SK-N-SH (cell line): ENCODE measurements at regions of chr16 and their contacts with region 1.

Region 1: DNA sequence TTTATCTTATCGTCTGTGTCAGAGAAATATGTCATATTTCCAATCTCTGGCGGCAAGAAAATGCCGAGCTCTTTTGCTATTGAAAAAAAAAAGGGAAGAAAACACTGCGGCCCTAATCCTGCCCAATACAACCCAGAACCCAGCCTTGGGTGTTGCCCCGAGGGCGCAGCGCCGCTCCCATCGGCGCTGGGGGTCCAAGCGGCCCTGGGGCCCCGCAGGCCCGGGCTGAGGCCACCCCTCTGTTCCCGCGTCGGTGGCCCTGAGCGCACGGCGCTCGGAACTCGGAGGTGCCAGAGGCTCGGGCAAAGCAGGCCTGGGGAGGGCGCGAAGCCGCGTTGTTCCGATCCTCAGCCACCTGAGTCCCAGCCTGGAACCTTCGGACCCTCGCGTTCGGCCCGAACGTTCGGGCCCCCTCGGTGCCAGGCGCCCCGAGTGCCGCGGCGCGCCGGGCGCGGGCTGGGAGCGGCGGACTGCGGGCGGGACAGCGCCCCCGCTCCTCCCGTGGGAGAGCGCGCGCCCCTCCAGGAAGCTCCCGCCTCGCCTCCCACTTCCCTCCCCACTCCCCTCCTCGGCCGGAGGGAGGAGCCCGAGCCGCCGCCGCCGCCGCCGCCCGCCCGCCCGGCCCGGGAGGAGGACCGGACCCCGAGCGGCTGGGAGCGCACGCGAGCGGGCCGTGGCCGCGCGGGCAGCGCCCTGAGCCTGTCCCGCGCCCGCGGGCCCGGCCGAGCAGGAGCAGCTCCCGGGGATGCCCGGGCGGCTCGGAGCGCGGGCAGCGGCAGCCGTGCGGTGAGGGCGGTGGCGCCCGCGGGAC is at the start of gene CPNE2:
- DNase-seq: peak; percentile 95
- H3K4me3 ChIP-seq: peak within 1 kb of the TSS; percentile 75 to 81
- H3K27ac ChIP-seq: peak within 1 kb of the TSS; percentile 36 to 51; a peak in 2 of 4 replicates
- H3K4me1 ChIP-seq: peaks cover 12 to 25% of the 10 kb centered on the region in 2 experiments; a peak in 1 of 4 replicates
- H3K27me3 ChIP-seq: no peaks in the 10 kb centered on the region
- CTCF ChIP-seq: no peak; the same call in 1 of the 2 replicates
- EP300 ChIP-seq: no peak
- RAD21 ChIP-seq: no peak
- polyA plus RNA-seq, gene CPNE2: 63.8 and 73.0 TPM in 2 replicates

Region 2: DNA sequence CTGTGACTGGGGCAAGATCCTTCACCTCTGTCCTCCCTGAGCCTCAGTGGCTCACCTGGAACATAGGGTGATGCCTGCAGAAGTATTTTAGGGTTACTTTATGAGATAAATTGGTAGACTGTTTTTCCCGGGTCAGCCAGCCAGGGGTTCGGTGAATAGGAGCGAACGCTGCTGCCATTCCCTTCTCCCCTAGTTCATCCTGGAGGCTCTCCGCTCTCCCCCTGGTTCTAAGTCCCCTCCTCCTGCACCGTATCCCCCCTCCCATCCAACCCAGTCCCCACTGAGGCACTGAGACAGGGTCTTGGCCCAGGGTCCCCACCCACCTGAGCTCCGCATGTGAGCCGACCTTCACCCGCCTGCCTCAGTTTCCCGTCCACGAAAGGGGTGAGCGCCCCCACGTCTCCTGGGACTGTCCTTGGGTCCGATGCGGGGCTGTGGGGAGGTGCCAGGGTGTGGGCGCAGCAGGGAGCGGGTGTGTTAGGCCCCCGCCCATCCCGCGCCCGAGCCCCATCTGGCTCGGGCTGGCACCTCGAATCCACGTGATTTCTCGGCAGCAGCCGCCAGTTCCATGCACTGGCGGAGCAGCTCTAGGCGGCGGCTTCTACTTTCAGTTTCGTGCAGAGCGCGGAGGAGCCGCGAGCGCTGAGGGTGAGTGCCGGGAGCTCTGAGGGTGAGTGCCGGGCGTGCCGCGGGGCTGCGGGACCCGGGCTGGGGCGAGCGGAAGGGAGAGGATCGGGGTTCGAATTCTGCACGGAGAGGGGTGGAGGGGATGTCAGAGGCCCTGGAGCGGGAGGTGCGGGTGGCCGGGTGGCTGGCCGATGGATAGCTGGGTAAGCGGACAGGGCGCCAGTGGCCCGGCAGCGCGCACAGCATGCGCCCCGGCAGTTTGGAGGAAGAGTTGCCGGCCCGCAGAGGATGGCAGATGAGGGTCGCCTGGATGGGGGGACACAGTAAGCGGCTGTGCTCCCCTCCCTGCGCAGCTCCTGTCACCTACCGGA is 102.9 kb before region 1 on chr16 and contains the start of gene NLRC5:
- CTCF ChIA-PET with region 1: no interaction called
- POLR2A ChIA-PET with region 1: no interaction called
- DNase-seq: peak; percentile 91
- H3K4me3 ChIP-seq: peak within 1 kb of the TSS; percentile 64 to 86
- H3K27ac ChIP-seq: peak within 1 kb of the TSS; percentile 39; a peak in 3 of 4 replicates
- H3K4me1 ChIP-seq: peaks cover 12 to 19% of the 10 kb centered on the region in 2 experiments; a peak in 2 of 4 replicates
- H3K27me3 ChIP-seq: no peaks in the 10 kb centered on the region
- CTCF ChIP-seq: no peak
- EP300 ChIP-seq: peak in 1 of 2 experiments; percentile 16; a peak in 1 of 4 replicates
- RAD21 ChIP-seq: peak; percentile 12; the same call in 1 of the 2 replicates
- polyA plus RNA-seq, gene NLRC5: 6.5 and 7.8 TPM in 2 replicates

Region 3: DNA sequence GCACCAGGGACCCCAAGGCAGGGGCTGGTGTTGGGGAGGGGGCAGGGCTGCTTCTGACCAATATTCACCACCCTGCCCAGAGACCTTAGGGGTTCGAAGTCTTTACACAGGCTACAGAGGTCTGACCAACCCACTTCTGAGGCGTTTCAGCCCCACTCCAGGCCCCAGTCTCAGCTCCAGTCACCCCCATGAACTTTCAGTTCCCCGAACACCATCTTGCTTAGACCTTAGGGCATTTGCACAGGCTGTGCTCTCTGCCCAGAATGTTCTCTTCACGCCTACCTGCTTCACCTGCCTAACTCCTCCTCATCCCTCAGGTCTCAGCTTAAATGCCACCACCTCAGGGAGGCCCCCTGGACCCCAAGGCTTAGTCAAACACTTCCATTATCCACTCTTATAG is 25.6 kb before region 1 on chr16:
- CTCF ChIA-PET with region 1: interaction called, 11 read pairs
- POLR2A ChIA-PET with region 1: interaction called, 7 read pairs
- DNase-seq: no peak
- H3K4me3 ChIP-seq: no peak overlapping the region
- H3K27ac ChIP-seq: no peak overlapping the region
- H3K4me1 ChIP-seq: peaks cover 0 to 12% of the 10 kb centered on the region in 2 experiments; a peak in 2 of 4 replicates
- H3K27me3 ChIP-seq: no peaks in the 10 kb centered on the region
- CTCF ChIP-seq: no peak
- EP300 ChIP-seq: no peak
- RAD21 ChIP-seq: no peak

Region 4: GRCh38 chr16:57077714-57078113 is 14.5 kb before region 1 on chr16:
- CTCF ChIA-PET with region 1: interaction called, 34 read pairs
- POLR2A ChIA-PET with region 1: no interaction called
- DNase-seq: no peak
- H3K4me3 ChIP-seq: no peak overlapping the region
- H3K27ac ChIP-seq: no peak overlapping the region
- H3K4me1 ChIP-seq: peaks cover 0 to 4% of the 10 kb centered on the region in 2 experiments; a peak in 1 of 4 replicates
- H3K27me3 ChIP-seq: no peaks in the 10 kb centered on the region
- CTCF ChIP-seq: no peak
- EP300 ChIP-seq: no peak
- RAD21 ChIP-seq: no peak

Region 5: GRCh38 chr16:57106767-57107166 is 14.6 kb after region 1 on chr16:
- CTCF ChIA-PET with region 1: interaction called, 67 read pairs
- POLR2A ChIA-PET with region 1: interaction called, 15 read pairs
- DNase-seq: peak; percentile 65
- H3K4me3 ChIP-seq: no peak overlapping the region
- H3K27ac ChIP-seq: no peak overlapping the region; a peak in 1 of 4 replicates
- H3K4me1 ChIP-seq: peaks cover 0 to 16% of the 10 kb centered on the region in 2 experiments; a peak in 1 of 4 replicates
- H3K27me3 ChIP-seq: no peaks in the 10 kb centered on the region
- CTCF ChIP-seq: no peak
- EP300 ChIP-seq: no peak
- RAD21 ChIP-seq: no peak

Region 6: GRCh38 chr16:57147381-57148221 is 55.4 kb after region 1 on chr16:
- CTCF ChIA-PET with region 1: interaction called, 10 read pairs
- POLR2A ChIA-PET with region 1: no interaction called
- DNase-seq: peak; percentile 59
- H3K4me3 ChIP-seq: no peak overlapping the region
- H3K27ac ChIP-seq: peak overlapping the region in 1 of 2 experiments; percentile 82; a peak in 2 of 4 replicates
- H3K4me1 ChIP-seq: peaks cover 19 to 48% of the 10 kb centered on the region in 2 experiments; a peak in 3 of 4 replicates
- H3K27me3 ChIP-seq: no peaks in the 10 kb centered on the region
- CTCF ChIP-seq: no peak
- EP300 ChIP-seq: no peak
- RAD21 ChIP-seq: no peak

Region 7: DNA sequence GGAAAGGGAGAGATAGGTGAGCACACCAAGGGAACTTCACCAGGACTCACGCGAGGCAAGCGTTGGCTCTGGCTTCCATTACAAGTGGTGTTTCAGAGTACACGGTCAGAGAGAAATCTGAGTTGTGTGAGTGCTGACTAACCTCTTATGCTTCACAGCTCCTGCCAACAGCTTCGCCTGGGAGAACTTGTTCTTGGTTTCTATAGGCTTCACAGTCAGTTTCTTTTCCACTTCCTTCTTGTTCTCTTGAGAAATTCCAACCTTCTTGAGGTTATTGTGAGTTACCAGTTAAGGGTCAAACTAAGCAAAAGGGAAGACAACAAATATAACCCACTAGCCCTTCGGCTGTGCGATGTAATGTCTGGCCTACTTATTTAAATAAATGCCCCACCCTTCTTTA is 74.8 kb after region 1 on chr16:
- CTCF ChIA-PET with region 1: interaction called, 13 read pairs
- POLR2A ChIA-PET with region 1: interaction called, 4 read pairs
- DNase-seq: no peak
- H3K4me3 ChIP-seq: no peak overlapping the region
- H3K27ac ChIP-seq: no peak overlapping the region
- H3K4me1 ChIP-seq: peaks cover 0 to 3% of the 10 kb centered on the region in 2 experiments; a peak in 1 of 4 replicates
- H3K27me3 ChIP-seq: no peaks in the 10 kb centered on the region
- CTCF ChIP-seq: no peak
- EP300 ChIP-seq: no peak
- RAD21 ChIP-seq: no peak

Region 8: DNA sequence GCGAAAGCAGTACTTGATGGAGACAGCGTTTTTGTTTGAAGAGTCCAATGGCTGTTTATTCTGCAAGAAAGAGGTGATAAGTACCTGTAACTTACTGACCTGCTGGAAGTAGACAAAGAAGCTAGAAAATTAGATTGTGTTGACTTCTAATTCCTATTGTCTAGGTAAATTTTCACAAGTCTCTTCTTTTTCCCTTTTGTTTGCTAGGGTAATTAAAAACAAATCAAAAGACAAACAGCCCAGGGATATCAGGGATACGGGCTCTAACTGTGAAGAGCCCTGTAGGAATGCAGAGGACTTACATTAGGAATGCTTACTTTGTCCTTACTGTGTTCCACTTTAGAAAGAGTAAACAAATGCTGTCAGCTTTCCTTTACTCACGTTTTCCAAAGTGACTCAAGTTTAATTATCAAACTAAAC is 86.6 kb after region 1 on chr16:
- CTCF ChIA-PET with region 1: interaction called, 10 read pairs
- POLR2A ChIA-PET with region 1: no interaction called
- DNase-seq: no peak
- H3K4me3 ChIP-seq: no peak overlapping the region
- H3K27ac ChIP-seq: peak overlapping the region in 1 of 2 experiments; percentile 87; a peak in 2 of 4 replicates
- H3K4me1 ChIP-seq: peaks cover 0 to 22% of the 10 kb centered on the region in 2 experiments; a peak in 3 of 4 replicates
- H3K27me3 ChIP-seq: no peaks in the 10 kb centered on the region
- CTCF ChIP-seq: no peak
- EP300 ChIP-seq: no peak
- RAD21 ChIP-seq: no peak